ENCODE measurements at regions of chr21 and their contacts with region 1.

Region 1: DNA sequence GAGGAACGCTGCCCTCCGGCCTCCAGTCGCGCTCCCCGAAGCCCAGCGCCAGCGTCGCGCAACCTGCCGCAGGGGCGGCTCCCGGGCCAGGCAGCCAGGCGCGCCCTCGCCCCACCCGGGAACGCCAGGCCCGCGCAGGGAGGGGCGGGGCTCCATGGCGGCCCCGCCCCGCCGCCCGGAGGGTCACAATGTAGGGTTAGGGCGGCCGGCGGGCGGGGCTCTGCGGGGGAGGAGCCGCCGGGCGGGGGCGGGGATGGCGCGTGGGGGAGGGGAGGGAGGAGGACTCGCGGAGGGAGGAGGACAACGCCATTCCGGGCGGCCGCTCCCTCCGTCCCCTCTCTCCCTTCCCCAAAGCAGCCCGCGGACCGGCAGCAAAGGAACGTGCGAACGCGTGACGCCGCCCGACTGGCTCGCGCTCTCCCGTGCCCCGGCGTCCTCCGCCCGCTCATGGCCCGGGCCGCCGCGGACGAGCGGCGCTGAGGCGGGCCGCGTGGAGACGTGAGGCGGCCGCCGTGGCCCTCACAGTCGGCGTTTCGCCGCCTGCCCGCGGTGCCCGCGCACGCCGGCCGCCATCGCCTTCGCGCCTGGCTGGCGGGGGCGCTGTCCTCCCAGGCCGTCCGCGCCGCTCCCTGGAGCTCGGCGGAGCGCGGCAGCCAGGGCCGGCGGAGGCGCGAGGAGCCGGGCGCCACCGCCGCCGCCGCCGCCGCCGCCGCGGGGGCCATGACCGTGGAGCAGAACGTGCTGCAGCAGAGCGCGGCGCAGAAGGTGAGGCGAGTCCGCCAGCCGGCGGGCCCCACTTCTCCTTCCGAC is at the start of gene USP25:
- DNase-seq: peak; percentile 90
- ATAC-seq: peak; percentile 82
- H3K4me3 Mint-ChIP-seq: peak within 1 kb of the TSS; percentile 90
- H3K27ac Mint-ChIP-seq: peak within 1 kb of the TSS; percentile 90
- H3K4me1 Mint-ChIP-seq: peaks cover 25% of the 10 kb centered on the region
- H3K27me3 Mint-ChIP-seq: peaks cover 4% of the 10 kb centered on the region
- total RNA-seq, gene USP25: 31.8 to 35.8 TPM

Region 2: DNA sequence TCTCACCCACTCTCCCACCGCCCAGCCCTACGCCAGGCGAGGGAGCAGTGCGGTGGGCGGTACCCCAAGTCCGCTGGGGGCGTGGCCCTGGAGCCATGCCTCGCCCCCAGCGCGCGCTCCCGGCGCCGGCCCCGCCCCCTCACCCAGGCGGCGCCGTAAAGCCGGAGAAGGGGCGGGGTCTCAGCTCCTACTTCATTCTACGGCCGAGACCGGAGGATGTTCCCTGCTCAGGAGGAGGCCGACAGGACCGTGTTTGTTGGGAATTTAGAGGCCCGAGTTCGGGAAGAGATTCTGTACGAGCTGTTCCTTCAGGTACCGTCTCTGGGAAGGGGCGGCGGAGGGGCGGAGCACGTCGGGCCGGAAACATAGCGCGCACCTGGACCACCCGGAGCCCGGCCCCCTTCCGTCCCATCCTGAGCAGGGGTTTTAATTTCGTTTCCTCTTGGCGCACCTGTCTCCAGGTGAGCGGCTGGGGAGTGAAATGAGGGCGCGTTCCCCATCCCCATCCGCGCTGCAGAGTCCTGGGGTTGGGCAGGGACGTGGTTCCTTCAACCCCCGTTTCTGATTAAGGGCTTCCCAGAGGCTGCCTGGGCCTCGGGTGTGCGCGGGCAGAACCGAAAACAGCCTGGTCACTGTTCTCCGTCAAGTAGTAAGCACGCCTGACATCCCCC is 1513.8 kb before region 1 on chr21 and contains the start of gene RBM11:
- CTCF ChIA-PET with region 1: no interaction called
- POLR2A ChIA-PET with region 1: no interaction called
- intact Hi-C with region 1: loop called in 1 of 2 experiments (anchors 2 kb)
- DNase-seq: peak; percentile 91
- ATAC-seq: peak; percentile 96
- H3K4me3 Mint-ChIP-seq: peak within 1 kb of the TSS; percentile 80
- H3K27ac Mint-ChIP-seq: peak within 1 kb of the TSS; percentile 31
- H3K4me1 Mint-ChIP-seq: peaks cover 6% of the 10 kb centered on the region
- H3K27me3 Mint-ChIP-seq: peaks cover 3% of the 10 kb centered on the region
- total RNA-seq, gene RBM11: 5.1 TPM

Region 3: DNA sequence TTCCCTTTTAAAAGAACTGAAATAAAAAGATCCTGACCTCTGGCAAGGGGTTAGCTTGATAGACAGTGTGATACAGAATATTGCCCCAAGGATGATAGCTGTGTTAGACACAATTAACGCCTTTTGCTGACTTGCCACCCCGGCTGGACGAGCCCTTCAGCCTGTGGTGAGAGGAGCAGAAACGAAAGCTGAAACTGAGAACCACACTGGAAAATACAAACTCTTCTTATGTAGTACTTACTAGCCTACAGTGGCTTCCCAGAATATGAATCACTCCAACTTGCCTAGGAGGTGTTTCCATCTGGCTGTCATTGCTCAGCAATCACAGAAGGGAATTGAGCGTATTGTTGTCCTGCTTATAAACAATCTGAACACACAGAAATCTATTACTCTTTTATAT is 1206.6 kb before region 1 on chr21:
- CTCF ChIA-PET with region 1: no interaction called
- POLR2A ChIA-PET with region 1: no interaction called
- intact Hi-C with region 1: loop called in 1 of 2 experiments (anchors 5 kb)
- DNase-seq: peak; percentile 64
- ATAC-seq: peak; percentile 79
- H3K4me3 Mint-ChIP-seq: peak overlapping the region; percentile 59
- H3K27ac Mint-ChIP-seq: peak overlapping the region; percentile 91
- H3K4me1 Mint-ChIP-seq: peaks cover 62% of the 10 kb centered on the region
- H3K27me3 Mint-ChIP-seq: no peaks in the 10 kb centered on the region

Region 4: GRCh38 chr21:15192243-15192642 is 537.6 kb before region 1 on chr21:
- CTCF ChIA-PET with region 1: no interaction called
- POLR2A ChIA-PET with region 1: no interaction called
- intact Hi-C with region 1: no loop called
- DNase-seq: no peak
- ATAC-seq: no peak
- H3K4me3 Mint-ChIP-seq: no peak overlapping the region
- H3K27ac Mint-ChIP-seq: no peak overlapping the region
- H3K4me1 Mint-ChIP-seq: no peaks in the 10 kb centered on the region
- H3K27me3 Mint-ChIP-seq: no peaks in the 10 kb centered on the region

Region 5: GRCh38 chr21:15243406-15243805 is 486.5 kb before region 1 on chr21:
- CTCF ChIA-PET with region 1: no interaction called
- POLR2A ChIA-PET with region 1: no interaction called
- intact Hi-C with region 1: no loop called
- DNase-seq: no peak
- ATAC-seq: no peak
- H3K4me3 Mint-ChIP-seq: no peak overlapping the region
- H3K27ac Mint-ChIP-seq: no peak overlapping the region
- H3K4me1 Mint-ChIP-seq: no peaks in the 10 kb centered on the region
- H3K27me3 Mint-ChIP-seq: peaks cover 3% of the 10 kb centered on the region

Region 6: GRCh38 chr21:15797577-15798363 is 67.9 kb after region 1 on chr21:
- CTCF ChIA-PET with region 1: no interaction called
- POLR2A ChIA-PET with region 1: no interaction called
- intact Hi-C with region 1: loop called in 1 of 2 experiments (anchors 5 kb)
- DNase-seq: no peak
- ATAC-seq: no peak
- H3K4me3 Mint-ChIP-seq: no peak overlapping the region
- H3K27ac Mint-ChIP-seq: no peak overlapping the region
- H3K4me1 Mint-ChIP-seq: peaks cover 44% of the 10 kb centered on the region
- H3K27me3 Mint-ChIP-seq: no peaks in the 10 kb centered on the region

Region 7: GRCh38 chr21:15826147-15826780 is 96.4 kb after region 1 on chr21:
- CTCF ChIA-PET with region 1: no interaction called
- POLR2A ChIA-PET with region 1: no interaction called
- intact Hi-C with region 1: loop called in 1 of 2 experiments (anchors 2 kb)
- DNase-seq: peak; percentile 32
- ATAC-seq: peak; percentile 72
- H3K4me3 Mint-ChIP-seq: no peak overlapping the region
- H3K27ac Mint-ChIP-seq: no peak overlapping the region
- H3K4me1 Mint-ChIP-seq: peaks cover 29% of the 10 kb centered on the region
- H3K27me3 Mint-ChIP-seq: no peaks in the 10 kb centered on the region